HCT116 (cell line): ENCODE measurements at regions of chr7 and their contacts with region 1.

Region 1: GRCh38 chr7:27196287-27196767 is 3.6 kb downstream of the HOXA13 start:
- DNase-seq: no peak
- ATAC-seq: no peak
- H3K4me3 ChIP-seq: no peak overlapping the region
- H3K27ac ChIP-seq: no peak overlapping the region
- H3K4me1 ChIP-seq: peaks cover 0 to 21% of the 10 kb centered on the region in 2 experiments; a peak in 3 of 4 replicates
- H3K27me3 ChIP-seq: no peaks in the 10 kb centered on the region
- CTCF ChIP-seq: peak; percentile 62 to 87 (median 79)
- POLR2A ChIP-seq: no peak
- RAD21 ChIP-seq: peak; percentile 92

Region 2: GRCh38 chr7:27150568-27151340 is 45.6 kb before region 1 on chr7:
- CTCF ChIA-PET with region 1: no interaction called
- POLR2A ChIA-PET with region 1: no interaction called
- RAD21 ChIA-PET with region 1: no interaction called
- intact Hi-C with region 1: no loop called
- DNase-seq: no peak
- ATAC-seq: peak; percentile 62
- H3K4me3 ChIP-seq: peak overlapping the region; percentile 60 to 71
- H3K27ac ChIP-seq: peak overlapping the region; percentile 82
- H3K4me1 ChIP-seq: peaks cover 30 to 69% of the 10 kb centered on the region in 2 experiments
- H3K27me3 ChIP-seq: no peaks in the 10 kb centered on the region
- CTCF ChIP-seq: peak in 2 of 3 experiments; percentile 76 to 83; a peak in 4 of 6 replicates
- POLR2A ChIP-seq: peak; percentile 83
- RAD21 ChIP-seq: no peak

Region 3: GRCh38 chr7:27254625-27255024 is 58.3 kb after region 1 on chr7:
- CTCF ChIA-PET with region 1: no interaction called
- POLR2A ChIA-PET with region 1: no interaction called
- RAD21 ChIA-PET with region 1: no interaction called
- intact Hi-C with region 1: no loop called
- DNase-seq: no peak
- ATAC-seq: no peak
- H3K4me3 ChIP-seq: no peak overlapping the region
- H3K27ac ChIP-seq: no peak overlapping the region
- H3K4me1 ChIP-seq: no peaks in the 10 kb centered on the region
- H3K27me3 ChIP-seq: no peaks in the 10 kb centered on the region
- CTCF ChIP-seq: no peak
- POLR2A ChIP-seq: no peak
- RAD21 ChIP-seq: no peak

Region 4: DNA sequence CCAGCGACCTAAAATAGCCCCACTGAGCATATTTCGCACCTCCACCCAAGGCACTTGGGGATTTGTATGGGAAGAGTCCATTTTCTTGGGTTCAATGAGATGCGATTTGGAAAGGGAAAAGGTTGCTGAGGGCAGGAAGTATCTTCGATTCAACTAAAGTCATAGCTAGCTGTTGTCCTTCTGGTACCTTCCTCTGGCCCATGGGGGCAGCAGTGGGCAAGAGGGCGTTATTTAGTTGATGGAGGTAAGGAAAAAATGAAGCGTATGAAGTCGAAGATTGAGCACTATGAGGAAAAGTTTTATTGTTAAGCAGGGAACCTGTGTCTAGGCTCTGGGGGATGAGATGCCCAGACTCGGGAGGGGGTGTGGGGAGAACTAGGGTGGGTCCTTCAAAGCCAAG is 181.7 kb after region 1 on chr7:
- CTCF ChIA-PET with region 1: no interaction called
- POLR2A ChIA-PET with region 1: no interaction called
- RAD21 ChIA-PET with region 1: no interaction called
- intact Hi-C with region 1: no loop called
- DNase-seq: no peak
- ATAC-seq: peak; percentile 52; the same call in 1 of the 2 replicates
- H3K4me3 ChIP-seq: no peak overlapping the region
- H3K27ac ChIP-seq: no peak overlapping the region
- H3K4me1 ChIP-seq: peaks cover under 1 to 1% of the 10 kb centered on the region in 2 experiments; a peak in 2 of 4 replicates
- H3K27me3 ChIP-seq: no peaks in the 10 kb centered on the region
- CTCF ChIP-seq: peak in 2 of 3 experiments; percentile 25 to 26; a peak in 2 of 6 replicates
- POLR2A ChIP-seq: no peak
- RAD21 ChIP-seq: peak; percentile 16; the same call in 1 of the 2 replicates

Region 5: DNA sequence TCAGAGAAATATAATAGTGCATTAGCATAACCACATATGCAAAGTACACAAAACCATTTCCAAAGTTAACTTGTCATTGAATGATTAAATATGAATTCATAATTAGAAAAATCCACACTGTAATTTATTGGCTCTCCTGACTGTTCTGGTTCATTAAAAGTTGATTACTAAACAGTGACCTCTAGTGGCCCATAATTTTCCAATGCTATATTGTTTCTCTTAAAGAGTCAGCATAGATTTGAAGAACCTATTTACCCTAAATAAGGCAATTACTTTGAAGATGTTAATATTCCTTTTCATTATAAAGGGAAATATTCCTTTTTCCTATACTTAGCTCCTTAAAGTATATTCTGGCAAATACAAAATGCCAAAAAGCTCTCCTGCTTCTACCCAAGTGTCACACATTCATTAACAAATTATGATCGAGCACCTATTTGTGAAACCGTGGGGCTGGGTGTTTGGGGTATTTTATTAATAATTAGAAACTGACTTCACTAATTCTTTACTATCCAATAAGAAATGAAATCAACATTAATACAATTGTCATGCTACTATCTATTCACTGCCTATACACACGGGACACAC is 380.1 kb after region 1 on chr7:
- CTCF ChIA-PET with region 1: interaction called, 5 read pairs
- POLR2A ChIA-PET with region 1: no interaction called
- RAD21 ChIA-PET with region 1: no interaction called
- intact Hi-C with region 1: loop called (anchors 1 kb)
- DNase-seq: peak; percentile 29
- ATAC-seq: peak; percentile 64
- H3K4me3 ChIP-seq: no peak overlapping the region
- H3K27ac ChIP-seq: no peak overlapping the region
- H3K4me1 ChIP-seq: no peaks in the 10 kb centered on the region
- H3K27me3 ChIP-seq: no peaks in the 10 kb centered on the region
- CTCF ChIP-seq: peak; percentile 37 to 75 (median 60); a peak in 4 of 6 replicates
- POLR2A ChIP-seq: no peak
- RAD21 ChIP-seq: peak; percentile 70

Region 6: DNA sequence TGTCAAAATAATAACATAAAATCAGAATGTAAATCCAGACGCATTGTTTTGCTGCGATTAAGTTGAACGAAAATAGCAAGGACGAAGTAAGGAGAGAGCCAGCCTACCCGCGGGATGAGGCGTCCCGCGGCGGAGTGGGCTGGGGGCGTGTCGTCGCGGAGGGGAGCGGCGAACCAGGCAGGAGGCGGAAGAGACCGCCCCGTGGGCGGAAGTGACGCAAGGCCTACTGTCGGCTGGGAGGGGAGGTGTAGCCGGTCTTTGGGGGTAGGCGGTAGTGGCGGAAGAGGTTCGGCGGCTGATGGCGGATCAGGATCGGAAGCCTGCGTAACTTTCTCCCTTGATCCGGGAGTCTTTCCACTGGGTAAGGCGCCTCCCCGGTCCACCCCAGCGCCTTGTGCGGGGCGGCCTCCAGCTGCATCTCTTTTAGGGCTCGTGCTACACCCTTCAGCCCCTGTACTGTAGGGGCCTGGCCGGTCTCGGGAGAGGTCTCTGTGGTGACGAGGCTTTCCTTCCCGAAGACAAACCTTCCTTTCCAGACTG is 543.7 kb after region 1 on chr7 and contains the start of gene TAX1BP1:
- CTCF ChIA-PET with region 1: interaction called, 10 read pairs
- POLR2A ChIA-PET with region 1: no interaction called
- RAD21 ChIA-PET with region 1: interaction called, 3 to 6 read pairs
- intact Hi-C with region 1: loop called (anchors 10 kb)
- DNase-seq: peak; percentile 87
- ATAC-seq: peak; percentile 88
- H3K4me3 ChIP-seq: peak within 1 kb of the TSS; percentile 75 to 99
- H3K27ac ChIP-seq: peak within 1 kb of the TSS; percentile 73
- H3K4me1 ChIP-seq: peaks cover 11 to 18% of the 10 kb centered on the region in 2 experiments; a peak in 3 of 4 replicates
- H3K27me3 ChIP-seq: no peaks in the 10 kb centered on the region
- CTCF ChIP-seq: no peak
- POLR2A ChIP-seq: peak; percentile 94
- RAD21 ChIP-seq: no peak
- total RNA-seq, gene TAX1BP1: 68.1 TPM

Region 7: GRCh38 chr7:27774717-27775328 is 578.5 kb after region 1 on chr7:
- CTCF ChIA-PET with region 1: interaction called, 18 read pairs
- POLR2A ChIA-PET with region 1: interaction called, 5 read pairs
- RAD21 ChIA-PET with region 1: interaction called in 1 of 2 experiments, 3 read pairs
- intact Hi-C with region 1: loop called (anchors 5 kb)
- DNase-seq: peak; percentile 12
- ATAC-seq: no peak
- H3K4me3 ChIP-seq: no peak overlapping the region
- H3K27ac ChIP-seq: no peak overlapping the region
- H3K4me1 ChIP-seq: peaks cover 15 to 25% of the 10 kb centered on the region in 2 experiments
- H3K27me3 ChIP-seq: no peaks in the 10 kb centered on the region
- CTCF ChIP-seq: peak; percentile 52 to 70 (median 58); a peak in 5 of 6 replicates
- POLR2A ChIP-seq: no peak
- RAD21 ChIP-seq: peak; percentile 69

Region 8: DNA sequence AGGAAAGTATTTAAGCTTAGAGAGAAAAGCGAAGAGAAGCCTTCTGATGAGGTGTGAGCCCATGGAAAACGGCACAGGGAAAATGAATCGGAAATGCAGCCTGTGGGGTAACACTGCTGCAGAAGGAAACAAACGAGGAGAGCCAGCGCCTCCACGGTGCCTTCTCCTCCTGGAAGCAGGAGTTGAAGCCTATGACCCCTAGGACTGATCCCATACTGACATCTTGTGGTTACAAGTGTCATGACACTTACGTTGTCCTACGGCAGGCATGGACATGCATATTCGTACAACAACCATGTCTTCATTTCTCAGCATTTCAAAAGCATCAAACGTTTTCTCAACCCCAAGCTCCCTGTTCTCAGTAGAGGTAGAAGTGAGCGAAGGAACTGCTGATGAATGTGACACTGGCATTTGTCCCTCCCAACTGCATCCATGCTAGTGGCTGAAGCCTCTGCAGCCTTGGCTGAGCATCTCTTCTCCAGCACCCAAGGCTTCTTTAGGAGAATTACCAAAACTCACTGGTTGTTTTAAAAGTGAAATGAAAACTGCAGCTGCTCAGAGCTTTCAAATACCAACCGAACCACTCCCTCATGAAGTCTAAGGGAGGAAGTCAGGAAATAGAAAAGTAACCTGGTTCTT is 824.1 kb after region 1 on chr7:
- CTCF ChIA-PET with region 1: interaction called, 17 read pairs
- POLR2A ChIA-PET with region 1: no interaction called
- RAD21 ChIA-PET with region 1: interaction called in 1 of 2 experiments, 3 read pairs
- intact Hi-C with region 1: loop called (anchors 1 kb)
- DNase-seq: peak; percentile 64
- ATAC-seq: peak; percentile 98
- H3K4me3 ChIP-seq: no peak overlapping the region
- H3K27ac ChIP-seq: no peak overlapping the region
- H3K4me1 ChIP-seq: peaks cover 0 to 13% of the 10 kb centered on the region in 2 experiments; a peak in 1 of 4 replicates
- H3K27me3 ChIP-seq: no peaks in the 10 kb centered on the region
- CTCF ChIP-seq: peak; percentile 77 to 95 (median 86)
- POLR2A ChIP-seq: no peak
- RAD21 ChIP-seq: peak; percentile 98

Region 9: GRCh38 chr7:28096713-28097112 is 900.4 kb after region 1 on chr7:
- CTCF ChIA-PET with region 1: interaction called, 20 read pairs
- POLR2A ChIA-PET with region 1: no interaction called
- RAD21 ChIA-PET with region 1: interaction called in 1 of 2 experiments, 5 read pairs
- intact Hi-C with region 1: loop called (anchors 2 kb)
- DNase-seq: peak; percentile 42
- ATAC-seq: peak; percentile 74
- H3K4me3 ChIP-seq: no peak overlapping the region
- H3K27ac ChIP-seq: no peak overlapping the region
- H3K4me1 ChIP-seq: no peaks in the 10 kb centered on the region
- H3K27me3 ChIP-seq: no peaks in the 10 kb centered on the region
- CTCF ChIP-seq: peak; percentile 49 to 91 (median 70); a peak in 5 of 6 replicates
- POLR2A ChIP-seq: no peak
- RAD21 ChIP-seq: peak; percentile 77